ENCODE measurements at regions of chr16 and their contacts with region 1.

Region 1: DNA sequence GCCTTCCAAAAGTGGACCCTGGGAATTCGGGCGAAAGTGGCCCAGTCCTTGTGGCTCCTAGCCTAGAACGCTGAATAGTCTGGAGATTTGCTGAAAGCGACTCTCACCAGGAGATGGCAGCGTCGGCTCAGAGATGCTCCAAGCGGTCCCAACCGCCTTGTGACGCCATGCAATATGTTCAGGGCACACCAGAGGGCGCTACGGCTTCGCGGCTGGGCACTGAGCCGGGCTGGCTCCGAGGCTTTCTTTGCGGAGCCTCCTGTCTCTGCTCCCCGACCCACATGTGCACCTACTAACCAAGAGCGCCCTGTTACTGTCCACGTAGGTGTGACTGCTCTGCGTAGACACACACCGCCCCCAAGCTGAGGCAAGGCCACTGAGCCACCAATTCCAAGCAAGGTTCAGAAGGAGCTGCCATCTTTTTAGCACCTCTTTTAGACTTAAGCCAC is 36.9 kb downstream of the SYCE1L start:
- DNase-seq: peak; percentile 31
- H3K4me3 ChIP-seq: peak overlapping the region in 1 of 4 donors; percentile 41
- H3K27ac ChIP-seq: no peak overlapping the region
- H3K4me1 ChIP-seq: peaks cover 0 to 4% (median 0%) of the 10 kb centered on the region in 3 donors
- H3K27me3 ChIP-seq: peaks cover 0 to 34% (median 0%) of the 10 kb centered on the region in 4 donors
- CTCF ChIP-seq: peak; percentile 95 to 100 (median 98)
- POLR2A ChIP-seq: no peak

Region 2: GRCh38 chr16:77531752-77532151 is 295.7 kb after region 1 on chr16:
- intact Hi-C with region 1: no loop called
- DNase-seq: no peak
- H3K4me3 ChIP-seq: no peak overlapping the region
- H3K27ac ChIP-seq: no peak overlapping the region
- H3K4me1 ChIP-seq: no peaks in the 10 kb centered on the region
- H3K27me3 ChIP-seq: no peaks in the 10 kb centered on the region
- CTCF ChIP-seq: no peak
- POLR2A ChIP-seq: no peak

Region 3: GRCh38 chr16:77584205-77584859 is 348.2 kb after region 1 on chr16:
- intact Hi-C with region 1: loop called (anchors 5 kb)
- DNase-seq: no peak
- H3K4me3 ChIP-seq: no peak overlapping the region
- H3K27ac ChIP-seq: no peak overlapping the region
- H3K4me1 ChIP-seq: no peaks in the 10 kb centered on the region
- H3K27me3 ChIP-seq: peaks cover 0 to 33% (median 0%) of the 10 kb centered on the region in 4 donors
- CTCF ChIP-seq: peak; percentile 47 to 92 (median 90)
- POLR2A ChIP-seq: no peak